HCT116 (cell line): ENCODE measurements at regions of chr1 and their contacts with region 1.

Region 1: GRCh38 chr1:158095737-158096335 is 84.9 kb upstream of the CD1D start:
- DNase-seq: no peak
- ATAC-seq: peak; percentile 84
- H3K4me3 ChIP-seq: no peak overlapping the region
- H3K27ac ChIP-seq: no peak overlapping the region
- H3K4me1 ChIP-seq: peaks cover 0 to 7% of the 10 kb centered on the region in 2 experiments; a peak in 3 of 4 replicates
- H3K27me3 ChIP-seq: no peaks in the 10 kb centered on the region
- CTCF ChIP-seq: peak; percentile 60 to 93 (median 92); a peak in 5 of 6 replicates
- POLR2A ChIP-seq: no peak
- RAD21 ChIP-seq: peak; percentile 39

Region 2: DNA sequence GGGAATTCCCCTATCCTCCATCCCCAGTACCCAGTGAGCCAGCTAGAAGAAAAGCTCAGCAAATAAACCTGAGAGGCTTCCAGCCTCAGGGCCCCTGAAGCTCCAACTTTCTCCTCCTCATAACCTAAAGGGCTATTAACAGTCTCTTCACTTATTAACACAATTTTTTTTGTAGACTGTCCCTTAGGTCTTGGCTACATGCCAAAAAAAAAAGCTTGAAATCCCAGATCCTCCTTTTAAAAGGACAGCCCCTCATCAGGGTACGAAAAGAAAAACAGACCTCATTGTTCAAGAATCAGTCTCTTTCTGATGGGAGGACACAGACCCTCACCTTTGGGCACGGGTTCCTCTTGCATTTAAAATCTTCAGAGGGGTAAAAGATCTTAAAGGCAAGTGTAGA is 12.1 kb after region 1 on chr1:
- CTCF ChIA-PET with region 1: interaction called, 12 read pairs
- POLR2A ChIA-PET with region 1: no interaction called
- RAD21 ChIA-PET with region 1: no interaction called
- intact Hi-C with region 1: no loop called
- DNase-seq: no peak
- ATAC-seq: no peak
- H3K4me3 ChIP-seq: no peak overlapping the region
- H3K27ac ChIP-seq: no peak overlapping the region
- H3K4me1 ChIP-seq: peaks cover 0 to 7% of the 10 kb centered on the region in 2 experiments; a peak in 2 of 4 replicates
- H3K27me3 ChIP-seq: no peaks in the 10 kb centered on the region
- CTCF ChIP-seq: no peak
- POLR2A ChIP-seq: no peak
- RAD21 ChIP-seq: no peak

Region 3: DNA sequence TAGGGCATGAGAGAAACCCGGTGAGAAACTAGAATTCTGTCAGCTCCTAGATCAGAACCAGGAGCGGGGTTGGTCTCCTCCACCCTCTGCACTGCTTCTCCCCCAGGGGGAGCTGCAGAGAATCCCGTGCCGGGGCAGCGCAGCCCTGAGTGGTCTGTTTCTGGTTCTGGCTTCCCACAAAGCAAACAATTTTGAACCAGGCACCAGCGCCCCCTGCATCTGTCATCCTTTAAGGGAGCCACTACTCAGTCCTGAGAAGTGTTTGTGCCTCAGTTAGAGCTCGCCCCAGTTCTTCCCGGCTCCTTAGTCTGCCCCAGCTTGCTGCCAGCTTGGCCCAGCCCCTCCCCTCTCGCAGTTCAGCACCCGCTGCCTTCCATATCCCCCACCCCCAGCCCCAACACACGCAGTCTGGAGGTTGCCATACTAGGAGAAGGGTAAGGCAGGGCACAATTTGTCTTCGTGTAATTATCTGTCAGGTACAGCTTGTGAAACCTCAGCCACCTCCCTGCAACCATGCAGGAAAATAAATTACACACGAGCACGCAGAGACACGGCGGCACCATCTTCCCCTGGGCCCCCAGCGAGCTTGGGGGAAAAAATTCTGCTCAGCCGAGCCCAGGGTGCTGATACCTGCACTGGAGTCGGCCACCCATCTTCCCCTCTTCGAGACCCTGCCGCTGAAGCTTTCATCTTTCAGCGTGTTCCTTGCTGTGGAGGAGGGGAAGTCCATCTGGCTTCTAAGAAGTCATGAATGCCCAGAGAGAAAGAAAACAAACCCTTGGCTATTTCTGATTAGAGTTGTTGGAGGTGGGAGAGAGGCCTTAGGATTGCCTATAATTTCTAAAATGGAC is 22.2 kb after region 1 on chr1:
- CTCF ChIA-PET with region 1: interaction called, 64 read pairs
- POLR2A ChIA-PET with region 1: interaction called, 3 read pairs
- RAD21 ChIA-PET with region 1: interaction called in 1 of 2 experiments, 6 read pairs
- intact Hi-C with region 1: loop called (anchors 1 kb)
- DNase-seq: peak; percentile 32
- ATAC-seq: peak; percentile 75
- H3K4me3 ChIP-seq: no peak overlapping the region
- H3K27ac ChIP-seq: no peak overlapping the region
- H3K4me1 ChIP-seq: peaks cover 2 to 19% of the 10 kb centered on the region in 2 experiments; a peak in 2 of 4 replicates
- H3K27me3 ChIP-seq: peaks cover 6% of the 10 kb centered on the region; the same call in 1 of the 2 replicates
- CTCF ChIP-seq: peak; percentile 57 to 87 (median 74)
- POLR2A ChIP-seq: no peak
- RAD21 ChIP-seq: peak; percentile 52

Region 4: DNA sequence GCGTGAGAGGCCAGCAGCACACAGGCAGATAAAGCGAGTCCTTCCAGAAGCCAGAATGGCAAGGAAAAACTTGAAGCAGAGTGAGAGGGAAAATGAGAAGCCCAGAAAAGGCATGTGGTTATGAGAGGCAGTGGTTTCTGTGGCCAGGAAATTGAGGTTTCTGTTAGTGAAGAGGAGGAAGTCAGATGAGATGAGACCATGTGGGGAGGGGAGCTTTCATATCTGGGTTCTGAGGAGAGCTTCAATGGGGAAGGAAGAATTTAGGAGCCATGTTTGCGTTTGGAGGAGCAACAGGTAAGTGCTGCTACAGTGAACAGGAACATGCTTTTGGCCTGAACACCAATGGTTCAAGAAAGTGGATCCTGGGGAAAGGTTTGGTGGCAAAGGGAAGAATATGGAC is 152.3 kb after region 1 on chr1:
- CTCF ChIA-PET with region 1: no interaction called
- POLR2A ChIA-PET with region 1: no interaction called
- RAD21 ChIA-PET with region 1: no interaction called
- intact Hi-C with region 1: no loop called
- DNase-seq: no peak
- ATAC-seq: no peak
- H3K4me3 ChIP-seq: no peak overlapping the region
- H3K27ac ChIP-seq: no peak overlapping the region
- H3K4me1 ChIP-seq: no peaks in the 10 kb centered on the region
- H3K27me3 ChIP-seq: peaks cover 7% of the 10 kb centered on the region; the same call in 1 of the 2 replicates
- CTCF ChIP-seq: no peak
- POLR2A ChIP-seq: no peak
- RAD21 ChIP-seq: no peak

Region 5: GRCh38 chr1:158354255-158354654 is 258.4 kb after region 1 on chr1:
- CTCF ChIA-PET with region 1: no interaction called
- POLR2A ChIA-PET with region 1: no interaction called
- RAD21 ChIA-PET with region 1: no interaction called
- intact Hi-C with region 1: no loop called
- DNase-seq: no peak
- ATAC-seq: no peak
- H3K4me3 ChIP-seq: no peak overlapping the region
- H3K27ac ChIP-seq: no peak overlapping the region
- H3K4me1 ChIP-seq: no peaks in the 10 kb centered on the region
- H3K27me3 ChIP-seq: peaks cover 13% of the 10 kb centered on the region
- CTCF ChIP-seq: no peak
- POLR2A ChIP-seq: no peak
- RAD21 ChIP-seq: no peak

Region 6: DNA sequence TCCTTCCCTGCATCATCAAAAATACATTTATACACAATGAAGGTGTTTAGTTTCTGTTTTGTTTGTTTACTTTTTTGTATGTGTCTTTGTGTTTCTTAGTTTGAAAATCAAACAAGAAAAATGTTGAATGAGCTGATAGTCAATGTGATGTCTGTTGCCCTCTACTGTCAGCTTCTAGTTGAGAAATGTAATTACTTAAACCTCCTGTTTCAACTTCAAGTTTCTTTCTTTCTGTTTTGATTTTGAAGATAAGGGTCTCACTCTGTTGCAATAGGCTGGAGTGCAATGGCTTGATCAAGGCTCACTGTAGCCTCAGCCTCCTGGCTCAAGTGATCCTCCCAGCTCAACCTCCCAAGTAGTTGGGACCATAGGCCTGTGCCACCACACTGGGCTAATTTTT is 553.2 kb after region 1 on chr1:
- CTCF ChIA-PET with region 1: no interaction called
- POLR2A ChIA-PET with region 1: no interaction called
- RAD21 ChIA-PET with region 1: no interaction called
- intact Hi-C with region 1: no loop called
- DNase-seq: no peak
- ATAC-seq: no peak
- H3K4me3 ChIP-seq: no peak overlapping the region
- H3K27ac ChIP-seq: no peak overlapping the region
- H3K4me1 ChIP-seq: no peaks in the 10 kb centered on the region
- H3K27me3 ChIP-seq: no peaks in the 10 kb centered on the region
- CTCF ChIP-seq: no peak
- POLR2A ChIP-seq: no peak
- RAD21 ChIP-seq: no peak

Region 7: DNA sequence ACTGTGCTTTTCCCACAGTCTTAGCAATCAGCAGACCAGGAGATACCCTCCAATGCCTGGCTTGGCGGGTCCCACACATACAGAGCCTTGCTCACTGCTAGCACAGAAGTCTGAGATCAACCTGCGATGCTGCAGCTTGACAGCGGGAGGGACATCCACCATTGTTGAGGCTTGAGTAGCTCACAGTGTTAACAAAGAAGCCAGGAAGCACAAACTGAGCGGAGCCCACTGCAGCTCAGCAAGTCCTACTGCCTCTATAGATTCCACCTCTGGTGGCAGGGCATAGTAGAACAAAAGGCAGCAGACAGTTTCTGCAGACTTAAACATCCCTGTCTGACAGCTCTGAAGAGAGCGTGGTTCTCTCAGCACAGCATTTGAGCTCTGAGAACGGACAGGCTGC is 768.8 kb after region 1 on chr1:
- CTCF ChIA-PET with region 1: no interaction called
- POLR2A ChIA-PET with region 1: no interaction called
- RAD21 ChIA-PET with region 1: no interaction called
- intact Hi-C with region 1: no loop called
- DNase-seq: no peak
- ATAC-seq: no peak
- H3K4me3 ChIP-seq: no peak overlapping the region
- H3K27ac ChIP-seq: no peak overlapping the region
- H3K4me1 ChIP-seq: no peaks in the 10 kb centered on the region
- H3K27me3 ChIP-seq: no peaks in the 10 kb centered on the region
- CTCF ChIP-seq: no peak
- POLR2A ChIP-seq: no peak
- RAD21 ChIP-seq: no peak